CD8-positive, alpha-beta memory T cell (primary cell): ENCODE measurements at regions of chr17 and their contacts with region 1.

Region 1: GRCh38 chr17:63946440-63947367 is 14.6 kb upstream of the CD79B start:
- DNase-seq: peak; percentile 25 to 67 (median 63)
- H3K4me3 ChIP-seq: peak overlapping the region; percentile 39
- H3K4me3 Mint-ChIP-seq: peak overlapping the region; percentile 31 to 87 (median 83)
- H3K27ac ChIP-seq: no peak overlapping the region
- H3K27ac Mint-ChIP-seq: peak overlapping the region in 6 of 8 donors; percentile 32 to 75 (median 62)
- H3K4me1 ChIP-seq: peaks cover 23% of the 10 kb centered on the region
- H3K4me1 Mint-ChIP-seq: peaks cover 15 to 31% (median 22%) of the 10 kb centered on the region in 3 donors
- H3K27me3 ChIP-seq: no peaks in the 10 kb centered on the region
- H3K27me3 Mint-ChIP-seq: no peaks in the 10 kb centered on the region

Region 2: GRCh38 chr17:63904316-63904715 is 42.4 kb before region 1 on chr17:
- CTCF ChIA-PET with region 1: interaction called, 11 read pairs
- POLR2A ChIA-PET with region 1: no interaction called
- DNase-seq: no peak
- H3K4me3 ChIP-seq: no peak overlapping the region
- H3K4me3 Mint-ChIP-seq: no peak overlapping the region
- H3K27ac ChIP-seq: no peak overlapping the region
- H3K27ac Mint-ChIP-seq: no peak overlapping the region
- H3K4me1 ChIP-seq: no peaks in the 10 kb centered on the region
- H3K4me1 Mint-ChIP-seq: peaks cover 2 to 7% (median 5%) of the 10 kb centered on the region in 3 donors
- H3K27me3 ChIP-seq: no peaks in the 10 kb centered on the region
- H3K27me3 Mint-ChIP-seq: peaks cover 3 to 9% of the 10 kb centered on the region in 2 donors

Region 3: DNA sequence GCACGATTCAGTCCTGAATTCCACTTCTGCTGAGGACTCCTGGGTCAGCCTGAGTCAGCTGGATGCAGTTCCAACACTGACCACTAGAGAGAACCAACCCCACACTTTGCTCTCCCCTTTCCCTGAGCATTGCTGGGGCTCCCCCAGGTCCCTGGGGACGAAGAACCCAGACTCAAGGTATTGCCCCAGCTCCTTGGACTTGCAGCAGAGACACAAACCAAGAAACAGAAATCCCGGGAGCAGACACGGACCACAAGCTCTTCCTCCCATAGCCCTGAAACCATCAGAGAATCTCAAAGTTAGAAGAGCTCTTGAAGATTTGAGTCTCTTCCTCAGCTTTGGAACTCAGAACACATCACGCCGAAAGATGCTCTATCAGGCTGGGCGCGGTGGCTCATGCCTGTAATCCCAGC is 27.4 kb before region 1 on chr17:
- CTCF ChIA-PET with region 1: interaction called, 36 read pairs
- POLR2A ChIA-PET with region 1: no interaction called
- DNase-seq: peak; percentile 57 to 81 (median 71)
- H3K4me3 ChIP-seq: no peak overlapping the region
- H3K4me3 Mint-ChIP-seq: no peak overlapping the region
- H3K27ac ChIP-seq: no peak overlapping the region
- H3K27ac Mint-ChIP-seq: peak overlapping the region in 5 of 8 donors; percentile 17 to 78 (median 63)
- H3K4me1 ChIP-seq: peaks cover 8% of the 10 kb centered on the region
- H3K4me1 Mint-ChIP-seq: peaks cover 6 to 10% (median 10%) of the 10 kb centered on the region in 3 donors
- H3K27me3 ChIP-seq: no peaks in the 10 kb centered on the region
- H3K27me3 Mint-ChIP-seq: peaks cover 0 to 3% of the 10 kb centered on the region in 2 donors

Region 4: GRCh38 chr17:63966646-63967264 is 20.1 kb after region 1 on chr17:
- CTCF ChIA-PET with region 1: interaction called, 13 read pairs
- POLR2A ChIA-PET with region 1: no interaction called
- DNase-seq: peak in 3 of 5 donors; percentile 26 to 73 (median 67)
- H3K4me3 ChIP-seq: no peak overlapping the region
- H3K4me3 Mint-ChIP-seq: peak overlapping the region in 5 of 7 donors; percentile 1 to 73 (median 11)
- H3K27ac ChIP-seq: no peak overlapping the region
- H3K27ac Mint-ChIP-seq: peak overlapping the region in 5 of 8 donors; percentile 0 to 17 (median 6)
- H3K4me1 ChIP-seq: peaks cover 14% of the 10 kb centered on the region
- H3K4me1 Mint-ChIP-seq: peaks cover 20 to 27% (median 26%) of the 10 kb centered on the region in 3 donors
- H3K27me3 ChIP-seq: no peaks in the 10 kb centered on the region
- H3K27me3 Mint-ChIP-seq: peaks cover 0 to 3% of the 10 kb centered on the region in 2 donors

Region 5: DNA sequence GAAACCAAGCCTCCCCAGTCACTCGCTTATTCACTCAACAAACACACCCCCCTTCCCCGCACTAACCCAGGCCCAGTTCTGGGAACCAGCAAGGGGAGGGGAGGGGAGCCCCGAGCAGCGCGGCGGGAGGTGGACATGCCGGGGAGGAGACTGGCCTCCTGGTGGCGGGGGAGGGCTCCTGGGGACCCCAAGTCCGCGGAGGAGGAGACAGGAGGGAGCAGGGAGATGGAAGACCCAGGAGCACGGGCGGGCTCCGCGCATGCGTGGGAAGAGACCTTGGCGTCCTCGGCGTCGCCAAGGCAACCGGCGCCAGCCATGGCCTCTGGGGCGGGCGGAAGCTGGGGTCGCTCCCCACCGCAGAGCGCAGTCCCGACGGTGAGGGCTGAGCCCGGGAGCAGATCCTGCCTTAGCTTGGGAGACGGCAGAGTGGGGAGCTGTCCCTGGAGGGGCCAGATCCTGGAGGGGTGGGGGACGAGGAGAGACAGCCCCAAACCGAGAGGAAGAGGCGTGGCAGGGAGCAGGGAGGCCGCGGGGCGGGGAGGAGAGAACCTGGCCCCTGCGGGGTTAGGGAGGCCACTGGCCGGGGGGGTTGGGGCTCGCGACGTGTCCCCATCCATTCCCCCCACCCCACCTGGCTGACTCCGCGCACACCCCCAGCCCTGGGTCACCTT is 51.5 kb after region 1 on chr17 and contains the start of gene PRR29:
- CTCF ChIA-PET with region 1: interaction called, 11 read pairs
- POLR2A ChIA-PET with region 1: no interaction called
- DNase-seq: peak; percentile 68 to 88 (median 77)
- H3K4me3 ChIP-seq: peak within 1 kb of the TSS; percentile 52
- H3K4me3 Mint-ChIP-seq: peak within 1 kb of the TSS; percentile 87 to 96 (median 90)
- H3K27ac ChIP-seq: no peak within 1 kb of the TSS
- H3K27ac Mint-ChIP-seq: peak within 1 kb of the TSS; percentile 50 to 96 (median 90)
- H3K4me1 ChIP-seq: peaks cover 35% of the 10 kb centered on the region
- H3K4me1 Mint-ChIP-seq: peaks cover 44 to 58% (median 56%) of the 10 kb centered on the region in 3 donors
- H3K27me3 ChIP-seq: no peaks in the 10 kb centered on the region
- H3K27me3 Mint-ChIP-seq: no peaks in the 10 kb centered on the region
- total RNA-seq, gene PRR29: 0.24 to 0.51 TPM

Region 6: GRCh38 chr17:64145757-64146417 is 199.2 kb after region 1 on chr17:
- CTCF ChIA-PET with region 1: interaction called, 11 read pairs
- POLR2A ChIA-PET with region 1: interaction called, 5 read pairs
- DNase-seq: peak; percentile 89 to 98 (median 95)
- H3K4me3 ChIP-seq: peak overlapping the region; percentile 86
- H3K4me3 Mint-ChIP-seq: no peak overlapping the region
- H3K27ac ChIP-seq: peak overlapping the region; percentile 83
- H3K27ac Mint-ChIP-seq: no peak overlapping the region
- H3K4me1 ChIP-seq: peaks cover 25% of the 10 kb centered on the region
- H3K4me1 Mint-ChIP-seq: peaks cover 20 to 26% (median 26%) of the 10 kb centered on the region in 3 donors
- H3K27me3 ChIP-seq: no peaks in the 10 kb centered on the region
- H3K27me3 Mint-ChIP-seq: no peaks in the 10 kb centered on the region